Activated T-helper 2 cell treated with anti-CD3 and anti-CD28 coated beads, Interferon-gamma antibody, Interleukin-2, Interleukin-4, amounts not matched to agents 10 μg/mL and 5 μg/mL and 100 μg/mL, durations not matched to agents 14 hours and 24 hours and 36 hours (primary cell): ENCODE measurements at regions of chr11 and their contacts with region 1.

Region 1: DNA sequence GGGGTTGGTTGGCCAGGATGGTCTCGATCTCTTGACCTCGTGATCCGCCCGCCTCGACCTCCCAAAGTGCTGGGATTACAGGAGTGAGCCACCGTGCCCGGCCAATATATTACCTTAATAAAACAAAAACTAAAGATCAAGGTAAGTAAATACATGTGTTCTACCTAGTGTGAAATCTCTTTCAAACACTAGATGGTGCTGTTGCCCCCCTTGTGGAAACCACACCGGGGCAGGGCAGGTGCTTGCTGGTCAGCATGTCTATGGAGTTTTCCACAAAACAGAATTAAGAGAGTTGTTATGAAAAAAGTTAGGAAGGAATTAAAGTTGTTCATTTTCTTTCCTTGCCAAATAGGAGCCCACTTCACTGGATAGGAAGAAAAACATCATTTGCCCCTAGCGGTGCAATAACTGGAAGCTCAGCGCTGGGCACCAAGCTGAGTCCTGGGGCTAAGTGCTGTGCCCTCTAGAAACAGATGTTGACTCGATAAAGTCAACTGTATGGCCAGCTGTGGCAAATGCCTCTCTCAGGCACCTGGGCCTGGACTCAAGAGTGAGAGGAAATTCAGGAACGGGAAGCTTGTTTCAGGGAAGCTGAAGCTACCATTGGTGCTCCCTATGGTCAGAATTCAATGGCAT is 6.3 kb upstream of the KCNJ5 start:
- DNase-seq: peak; percentile 37
- H3K4me3 Mint-ChIP-seq: no peak overlapping the region
- H3K27ac Mint-ChIP-seq: no peak overlapping the region
- H3K4me1 Mint-ChIP-seq: no peaks in the 10 kb centered on the region
- H3K27me3 Mint-ChIP-seq: peaks cover 66% of the 10 kb centered on the region

Region 2: DNA sequence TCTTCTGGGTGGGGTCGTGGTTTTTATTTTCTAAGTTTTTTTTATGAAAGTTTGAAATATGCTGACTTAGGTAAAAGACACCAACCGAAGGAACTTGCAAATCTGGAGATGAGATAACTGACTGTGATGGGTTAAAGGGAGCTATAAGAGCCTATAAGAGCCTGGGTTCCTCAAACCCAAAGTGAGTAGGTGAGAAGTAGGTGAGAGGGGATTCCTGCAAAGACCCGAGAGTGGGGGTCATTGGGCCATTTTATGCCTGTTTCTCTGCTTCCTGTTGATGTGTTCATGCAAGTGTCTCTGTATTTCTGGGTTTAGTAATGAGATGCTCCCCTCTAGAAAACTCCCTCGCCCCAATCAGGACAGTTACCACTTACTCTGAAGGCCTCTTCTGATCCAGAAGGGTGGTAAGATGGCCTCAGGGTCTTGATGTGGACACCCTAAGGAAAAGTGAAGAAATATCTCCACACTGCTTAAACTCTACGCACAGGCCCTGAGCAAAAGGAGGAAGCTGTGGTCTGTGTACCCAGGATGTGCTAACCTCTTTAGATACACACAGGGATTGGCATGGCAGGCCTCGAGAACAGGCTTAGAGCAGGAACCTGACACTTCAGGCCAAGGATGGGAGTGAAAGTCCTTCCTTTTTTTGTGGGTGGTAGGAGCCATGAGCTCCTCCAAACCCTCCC is 189.1 kb before region 1 on chr11:
- intact Hi-C with region 1: no loop called
- DNase-seq: no peak
- H3K4me3 Mint-ChIP-seq: peak overlapping the region; percentile 80
- H3K27ac Mint-ChIP-seq: peak overlapping the region; percentile 87
- H3K4me1 Mint-ChIP-seq: peaks cover 63% of the 10 kb centered on the region
- H3K27me3 Mint-ChIP-seq: peaks cover 15% of the 10 kb centered on the region

Region 3: DNA sequence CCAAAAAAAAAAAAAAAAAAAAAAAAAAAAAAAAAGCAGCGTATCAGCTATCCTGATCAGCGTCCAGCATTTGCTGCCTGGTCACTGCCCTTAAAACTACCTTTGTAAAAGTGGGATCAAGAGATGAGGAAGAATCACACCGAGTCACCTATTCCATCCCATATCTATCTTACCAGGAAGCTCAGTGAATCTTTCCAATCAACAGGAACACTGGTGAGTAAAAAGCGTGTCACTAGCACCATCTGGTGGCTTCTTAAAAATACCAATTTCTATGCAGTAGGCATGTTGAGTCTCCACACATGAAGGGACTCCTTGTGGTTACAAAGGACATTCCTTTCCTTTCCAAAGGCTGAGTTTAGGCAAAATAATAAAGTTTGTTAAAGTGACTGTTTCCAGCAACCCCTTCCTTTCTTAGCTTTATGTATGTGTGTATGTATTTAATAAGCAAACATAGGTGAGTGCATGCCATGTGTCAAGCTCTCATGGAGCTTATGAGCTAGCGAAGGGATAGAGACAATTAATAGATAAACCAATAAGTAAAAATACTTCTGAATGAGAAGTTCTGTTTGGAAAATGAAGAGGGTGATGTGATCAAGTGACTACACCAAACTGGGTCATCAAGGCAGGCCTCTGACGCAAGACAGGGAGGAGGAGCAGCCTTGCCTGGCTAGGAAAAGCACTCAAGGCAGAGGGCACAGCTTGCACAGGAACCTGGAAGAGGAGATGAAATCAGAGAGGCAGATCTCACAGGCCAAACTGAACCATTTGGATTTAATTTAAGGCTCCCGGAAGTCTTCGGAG is 71.8 kb after region 1 on chr11:
- intact Hi-C with region 1: loop called (anchors 1 kb)
- DNase-seq: no peak
- H3K4me3 Mint-ChIP-seq: no peak overlapping the region
- H3K27ac Mint-ChIP-seq: no peak overlapping the region
- H3K4me1 Mint-ChIP-seq: no peaks in the 10 kb centered on the region
- H3K27me3 Mint-ChIP-seq: peaks cover 32% of the 10 kb centered on the region

Region 4: GRCh38 chr11:129023970-129024676 is 139.3 kb after region 1 on chr11:
- intact Hi-C with region 1: loop called (anchors 10 kb)
- DNase-seq: no peak
- H3K4me3 Mint-ChIP-seq: no peak overlapping the region
- H3K27ac Mint-ChIP-seq: no peak overlapping the region
- H3K4me1 Mint-ChIP-seq: peaks cover 18% of the 10 kb centered on the region
- H3K27me3 Mint-ChIP-seq: peaks cover 15% of the 10 kb centered on the region

Region 5: DNA sequence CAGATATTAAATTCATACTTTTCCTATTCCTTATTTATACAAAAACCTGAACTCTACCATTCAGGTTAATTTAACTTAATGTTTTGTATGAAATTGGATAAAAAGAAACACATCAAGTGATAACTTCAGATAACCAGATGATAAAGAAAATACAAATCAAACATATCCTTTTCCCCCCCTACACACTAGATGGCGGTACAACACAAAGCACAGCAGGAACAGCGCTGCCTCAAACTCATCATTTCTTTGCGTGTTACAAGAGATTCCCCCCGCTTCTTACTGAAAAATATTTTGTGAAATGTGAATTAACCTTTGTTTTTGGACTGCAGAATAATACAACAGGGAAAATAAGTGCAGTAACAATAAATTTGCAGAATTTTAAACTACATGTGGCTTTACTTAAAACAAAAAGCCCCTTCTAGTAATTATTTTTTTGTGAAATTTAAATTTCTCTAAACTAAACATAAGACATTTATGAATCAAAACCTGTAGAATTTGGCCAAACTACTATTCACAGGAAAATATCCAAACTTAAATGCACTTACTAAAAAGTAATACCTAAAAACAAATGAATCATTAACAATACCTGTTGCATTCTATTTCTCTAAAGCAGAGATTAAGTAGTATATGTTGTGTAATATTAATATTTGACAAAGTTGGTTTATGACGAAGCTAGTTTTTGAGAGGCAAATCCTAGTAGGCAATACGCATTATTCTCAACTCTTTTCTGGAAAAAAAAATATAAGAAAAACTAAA is 233.0 kb after region 1 on chr11:
- intact Hi-C with region 1: loop called (anchors 10 kb)
- DNase-seq: no peak
- H3K4me3 Mint-ChIP-seq: no peak overlapping the region
- H3K27ac Mint-ChIP-seq: no peak overlapping the region
- H3K4me1 Mint-ChIP-seq: peaks cover 10% of the 10 kb centered on the region
- H3K27me3 Mint-ChIP-seq: peaks cover 7% of the 10 kb centered on the region

Region 6: DNA sequence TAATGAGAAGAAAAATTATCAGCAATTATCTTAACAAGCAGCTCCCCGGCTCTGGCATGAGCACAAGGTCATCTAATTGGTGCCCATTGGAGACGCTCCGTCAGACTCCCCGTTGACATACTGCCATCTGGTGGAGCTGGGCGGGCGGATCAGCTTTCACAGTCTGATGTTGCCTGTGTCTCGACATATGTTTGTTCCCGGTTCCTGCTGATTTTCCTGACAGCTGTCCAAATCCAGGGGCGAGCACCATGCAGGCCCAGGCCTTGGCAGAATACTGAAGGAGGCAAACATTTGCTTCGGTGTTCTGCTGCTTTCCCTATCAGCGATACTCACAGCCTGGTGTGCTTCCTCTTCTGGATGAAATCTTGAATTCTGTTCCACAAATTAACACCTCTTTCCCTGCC is 447.1 kb after region 1 on chr11:
- intact Hi-C with region 1: loop called (anchors 2 kb)
- DNase-seq: peak; percentile 40
- H3K4me3 Mint-ChIP-seq: no peak overlapping the region
- H3K27ac Mint-ChIP-seq: no peak overlapping the region
- H3K4me1 Mint-ChIP-seq: peaks cover 2% of the 10 kb centered on the region
- H3K27me3 Mint-ChIP-seq: peaks cover 3% of the 10 kb centered on the region

Region 7: DNA sequence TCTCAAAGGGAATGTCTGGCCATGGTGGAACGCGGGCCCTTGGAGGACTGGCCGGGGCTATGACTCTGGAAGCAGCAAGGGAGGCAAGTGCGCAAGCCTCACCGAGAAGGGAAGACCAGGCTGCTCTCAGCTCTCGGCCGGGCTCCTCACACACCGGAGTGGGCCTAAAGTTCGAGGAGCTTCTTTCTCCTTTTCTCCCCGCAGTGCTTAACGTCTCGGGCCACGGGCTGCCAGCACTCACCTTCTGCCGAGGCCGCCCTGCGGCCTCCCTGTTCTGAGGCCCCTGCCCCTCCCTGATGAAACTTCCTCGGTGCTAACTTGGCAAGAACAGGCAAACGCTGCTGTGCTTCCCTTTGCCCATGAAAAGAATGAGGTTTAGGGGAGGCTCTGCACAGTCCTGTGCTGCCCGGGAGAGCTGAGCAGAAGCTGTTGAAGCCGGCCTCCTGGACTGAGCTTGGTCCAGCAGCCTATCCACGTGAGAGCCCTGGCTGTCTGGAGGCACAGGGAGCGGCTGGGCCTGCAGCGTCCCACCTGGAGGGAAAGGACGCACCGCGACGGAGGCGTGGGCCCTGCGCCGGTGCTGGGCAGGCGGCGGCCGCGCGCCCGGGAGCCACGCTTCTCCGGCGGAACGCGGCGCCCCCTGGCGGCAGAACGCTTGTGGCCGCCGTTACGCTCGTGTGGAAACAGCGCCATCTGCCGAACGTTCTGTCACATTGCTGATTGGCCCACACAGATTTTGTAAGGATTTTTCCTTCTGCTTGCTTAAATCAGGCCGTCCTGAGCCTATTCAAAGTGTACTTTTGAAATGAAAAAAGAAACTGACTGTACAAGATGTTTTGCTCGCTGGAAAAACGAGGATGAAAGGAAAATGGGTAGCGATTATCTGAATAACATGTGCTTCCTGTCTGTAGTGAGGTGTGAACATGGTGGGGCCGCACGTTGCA is 865.8 kb after region 1 on chr11:
- intact Hi-C with region 1: loop called (anchors 10 kb)
- DNase-seq: peak; percentile 72
- H3K4me3 Mint-ChIP-seq: no peak overlapping the region
- H3K27ac Mint-ChIP-seq: no peak overlapping the region
- H3K4me1 Mint-ChIP-seq: no peaks in the 10 kb centered on the region
- H3K27me3 Mint-ChIP-seq: peaks cover 18% of the 10 kb centered on the region